HCT116 (cell line): ENCODE measurements at regions of chr7 and their contacts with region 1.

Region 1: DNA sequence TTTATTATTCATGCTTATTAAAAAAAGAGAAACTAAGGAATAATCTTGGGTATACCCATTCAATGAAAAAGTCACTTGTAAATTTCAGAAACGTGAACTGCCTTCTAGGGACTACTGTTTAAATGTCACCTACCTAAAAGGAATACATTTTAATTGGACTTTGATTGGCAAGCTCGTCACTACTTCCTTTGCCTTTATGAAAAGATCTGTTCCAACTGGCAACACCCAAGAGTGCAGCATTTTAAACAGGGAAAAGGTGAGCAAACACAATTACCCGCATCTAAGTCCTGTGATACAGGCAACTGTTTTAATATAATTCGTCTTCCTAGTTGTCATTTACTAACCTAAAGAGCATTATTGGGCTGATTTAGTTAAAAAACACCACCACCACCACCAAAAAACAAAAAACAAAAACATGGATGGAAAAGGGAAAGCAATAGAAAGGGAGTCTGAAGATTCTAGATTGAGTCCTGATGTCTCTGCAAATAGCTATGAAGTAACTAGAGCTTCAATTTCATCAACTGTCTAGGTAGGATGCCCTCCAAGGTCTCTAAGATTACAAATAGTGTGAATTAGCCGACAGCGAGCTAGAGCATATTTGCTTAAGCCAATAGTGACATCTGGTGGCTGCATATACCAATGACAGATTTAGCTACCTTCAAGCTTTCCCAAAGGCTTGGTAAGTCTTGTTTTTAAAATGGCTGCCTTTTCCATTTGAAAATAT is 33.8 kb upstream of the ICA1 start:
- DNase-seq: peak; percentile 89
- ATAC-seq: peak; percentile 98
- H3K4me3 ChIP-seq: no peak overlapping the region
- H3K27ac ChIP-seq: no peak overlapping the region
- H3K4me1 ChIP-seq: no peaks in the 10 kb centered on the region
- H3K27me3 ChIP-seq: no peaks in the 10 kb centered on the region
- CTCF ChIP-seq: peak; percentile 67 to 74 (median 70)
- POLR2A ChIP-seq: no peak
- RAD21 ChIP-seq: peak; percentile 95

Region 2: GRCh38 chr7:7103343-7104313 is 1192.2 kb before region 1 on chr7:
- CTCF ChIA-PET with region 1: interaction called, 11 read pairs
- POLR2A ChIA-PET with region 1: no interaction called
- RAD21 ChIA-PET with region 1: no interaction called
- intact Hi-C with region 1: loop called (anchors 10 kb)
- DNase-seq: peak; percentile 48
- ATAC-seq: peak; percentile 59
- H3K4me3 ChIP-seq: no peak overlapping the region
- H3K27ac ChIP-seq: no peak overlapping the region
- H3K4me1 ChIP-seq: peaks cover 7 to 21% of the 10 kb centered on the region in 2 experiments; a peak in 3 of 4 replicates
- H3K27me3 ChIP-seq: no peaks in the 10 kb centered on the region
- CTCF ChIP-seq: peak; percentile 54 to 64 (median 61); a peak in 5 of 6 replicates
- POLR2A ChIP-seq: no peak
- RAD21 ChIP-seq: peak; percentile 86

Region 3: GRCh38 chr7:7595451-7595850 is 700.3 kb before region 1 on chr7:
- CTCF ChIA-PET with region 1: interaction called, 15 read pairs
- POLR2A ChIA-PET with region 1: no interaction called
- RAD21 ChIA-PET with region 1: no interaction called
- intact Hi-C with region 1: loop called (anchors 2 kb)
- DNase-seq: peak; percentile 8
- ATAC-seq: no peak
- H3K4me3 ChIP-seq: no peak overlapping the region
- H3K27ac ChIP-seq: no peak overlapping the region
- H3K4me1 ChIP-seq: no peaks in the 10 kb centered on the region
- H3K27me3 ChIP-seq: no peaks in the 10 kb centered on the region
- CTCF ChIP-seq: peak in 2 of 3 experiments; percentile 38 to 53; a peak in 3 of 6 replicates
- POLR2A ChIP-seq: no peak
- RAD21 ChIP-seq: peak; percentile 65

Region 4: GRCh38 chr7:7761340-7761980 is 534.3 kb before region 1 on chr7:
- CTCF ChIA-PET with region 1: no interaction called
- POLR2A ChIA-PET with region 1: no interaction called
- RAD21 ChIA-PET with region 1: no interaction called
- intact Hi-C with region 1: loop called (anchors 5 kb)
- DNase-seq: peak; percentile 26
- ATAC-seq: peak; percentile 60; the same call in 1 of the 2 replicates
- H3K4me3 ChIP-seq: no peak overlapping the region
- H3K27ac ChIP-seq: no peak overlapping the region
- H3K4me1 ChIP-seq: no peaks in the 10 kb centered on the region
- H3K27me3 ChIP-seq: no peaks in the 10 kb centered on the region
- CTCF ChIP-seq: peak; percentile 19 to 47 (median 40); a peak in 4 of 6 replicates
- POLR2A ChIP-seq: no peak
- RAD21 ChIP-seq: peak; percentile 62

Region 5: GRCh38 chr7:8277394-8277982 is 18.3 kb before region 1 on chr7:
- CTCF ChIA-PET with region 1: interaction called, 28 read pairs
- POLR2A ChIA-PET with region 1: no interaction called
- RAD21 ChIA-PET with region 1: interaction called, 3 to 7 read pairs
- intact Hi-C with region 1: no loop called
- DNase-seq: no peak
- ATAC-seq: peak; percentile 77
- H3K4me3 ChIP-seq: no peak overlapping the region
- H3K27ac ChIP-seq: no peak overlapping the region
- H3K4me1 ChIP-seq: no peaks in the 10 kb centered on the region
- H3K27me3 ChIP-seq: no peaks in the 10 kb centered on the region
- CTCF ChIP-seq: peak; percentile 46 to 60 (median 47); a peak in 5 of 6 replicates
- POLR2A ChIP-seq: no peak
- RAD21 ChIP-seq: peak; percentile 71